ENCODE measurements at regions of chr6 and their contacts with region 1.

Region 1: DNA sequence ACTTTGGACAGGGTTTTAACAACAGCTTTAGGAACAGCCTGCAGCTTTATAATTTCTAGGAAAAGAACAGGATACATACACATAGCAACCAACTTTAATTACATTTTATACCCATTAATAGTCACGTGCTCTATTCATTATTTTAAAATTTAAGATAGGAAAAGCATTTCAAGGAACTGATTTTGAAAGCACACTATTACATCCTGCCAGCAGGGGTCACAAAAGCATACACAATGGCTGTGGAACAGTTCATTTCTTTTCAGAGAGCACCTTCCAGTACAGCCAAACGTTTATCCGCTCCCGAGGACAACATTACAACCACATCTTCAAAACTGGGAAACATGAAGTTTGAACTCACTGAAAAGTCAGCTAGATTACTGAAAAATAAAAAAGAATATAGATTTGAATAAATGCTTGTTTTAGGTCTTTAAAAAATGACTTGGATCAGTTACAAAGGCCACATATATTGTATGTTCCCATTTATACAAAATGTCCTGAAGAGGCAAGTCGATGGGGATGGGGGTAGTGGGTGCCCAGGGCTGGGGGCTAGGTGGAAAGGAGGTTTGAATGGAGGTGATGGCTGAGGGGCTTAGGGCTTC is 104.6 kb upstream of the EXOC2 start:
- DNase-seq: peak in 1 of 2 experiments; percentile 35
- H3K4me3 ChIP-seq: no peak overlapping the region
- H3K27ac ChIP-seq: no peak overlapping the region
- H3K4me1 ChIP-seq: no peaks in the 10 kb centered on the region
- H3K27me3 ChIP-seq: no peaks in the 10 kb centered on the region
- CTCF ChIP-seq: peak; percentile 84

Region 2: GRCh38 chr6:222468-222867 is 575.1 kb before region 1 on chr6:
- CTCF ChIA-PET with region 1: interaction called, 21 read pairs
- POLR2A ChIA-PET with region 1: no interaction called
- intact Hi-C with region 1: no loop called
- DNase-seq: no peak
- H3K4me3 ChIP-seq: no peak overlapping the region
- H3K27ac ChIP-seq: no peak overlapping the region
- H3K4me1 ChIP-seq: no peaks in the 10 kb centered on the region
- H3K27me3 ChIP-seq: no peaks in the 10 kb centered on the region; the same call in 1 of the 2 replicates
- CTCF ChIP-seq: no peak

Region 3: DNA sequence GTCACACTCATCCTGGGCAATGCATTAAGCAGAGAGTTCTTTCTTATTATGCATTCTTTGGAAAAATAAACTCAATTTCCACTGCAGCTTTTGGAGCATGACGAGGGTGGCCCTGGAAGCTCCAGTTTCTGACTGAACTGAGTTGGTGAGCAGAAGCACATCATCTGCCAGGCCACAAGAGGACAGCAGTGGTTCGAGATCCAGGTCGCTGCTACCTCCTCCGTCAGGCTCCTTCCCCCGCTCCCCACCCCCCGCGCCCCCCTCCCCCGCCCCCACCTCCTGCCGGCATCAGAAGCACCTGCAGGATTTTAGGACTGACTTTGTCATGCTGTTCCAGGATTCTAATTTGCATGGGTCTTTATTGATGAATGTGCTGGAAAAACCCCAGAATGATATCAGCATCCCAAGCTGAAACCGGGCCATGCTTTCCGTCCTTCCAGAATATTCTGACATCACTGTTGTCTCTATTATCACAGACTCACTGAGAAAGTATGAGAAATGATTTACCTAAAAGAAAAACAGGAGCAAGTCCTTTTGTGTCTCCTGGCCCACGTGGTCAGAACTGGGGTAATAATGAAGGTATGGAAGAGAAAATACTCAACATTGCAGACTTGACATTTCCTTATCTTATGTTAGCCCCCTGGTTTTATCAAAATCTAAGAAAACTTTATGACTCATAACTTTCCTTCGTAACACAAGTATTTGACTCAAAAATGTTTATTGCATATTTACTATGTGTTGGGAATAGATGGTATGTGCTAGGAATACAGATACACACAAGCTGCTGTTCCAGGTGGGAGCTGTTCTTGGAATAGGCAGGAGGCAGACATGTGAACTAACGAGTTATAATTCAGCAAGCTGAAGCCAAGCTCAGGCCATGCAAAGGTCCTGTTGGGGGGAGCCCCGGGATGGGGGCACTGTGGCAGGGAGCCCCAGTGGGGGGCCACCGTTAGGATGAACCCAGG is 115.6 kb after region 1 on chr6:
- CTCF ChIA-PET with region 1: no interaction called
- POLR2A ChIA-PET with region 1: no interaction called
- intact Hi-C with region 1: loop called (anchors 2 kb)
- DNase-seq: peak; percentile 34 to 58
- H3K4me3 ChIP-seq: no peak overlapping the region
- H3K27ac ChIP-seq: no peak overlapping the region
- H3K4me1 ChIP-seq: peaks cover 7% of the 10 kb centered on the region
- H3K27me3 ChIP-seq: no peaks in the 10 kb centered on the region
- CTCF ChIP-seq: peak; percentile 49

Region 4: DNA sequence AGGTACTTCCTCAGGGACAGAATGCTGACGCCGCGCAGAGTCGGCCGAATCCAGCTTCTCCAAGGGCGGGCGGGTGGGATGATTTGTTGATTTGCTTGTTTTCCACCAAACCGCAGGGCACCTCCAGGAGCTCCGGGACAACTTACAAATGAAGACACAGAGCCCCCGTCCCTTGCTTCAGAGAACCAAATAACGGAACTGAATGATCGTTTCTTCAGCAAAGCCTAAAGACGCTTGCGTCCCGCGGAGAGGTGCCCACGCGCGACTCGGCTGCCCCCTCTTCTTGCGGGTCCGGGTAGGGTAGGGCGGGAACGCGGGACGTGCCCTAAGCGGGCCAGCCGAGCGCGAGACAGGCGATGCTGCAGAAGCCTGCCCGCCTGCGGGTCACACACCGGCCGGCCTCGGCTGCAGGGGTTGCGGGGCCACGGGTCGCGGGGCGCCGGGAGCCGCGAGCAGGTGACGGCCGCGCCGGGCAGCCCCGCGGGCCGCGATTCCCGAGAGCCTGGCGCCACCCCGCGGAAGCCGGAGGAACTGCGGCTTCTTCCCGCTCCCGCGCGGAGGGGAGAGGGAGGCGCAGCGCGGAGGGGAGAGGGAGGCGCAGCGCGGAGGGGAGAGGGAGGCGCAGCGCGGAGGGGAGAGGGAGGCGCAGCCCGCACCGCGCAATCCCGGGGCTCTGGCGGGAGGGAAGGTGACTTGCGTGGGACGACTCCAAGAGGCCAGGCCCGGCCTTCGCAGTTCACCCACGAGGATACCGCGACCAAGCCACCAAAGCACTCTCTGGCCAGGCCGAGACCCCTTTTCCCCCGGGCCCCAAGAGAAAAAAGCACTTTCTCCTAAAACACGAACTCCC is 584.1 kb after region 1 on chr6:
- CTCF ChIA-PET with region 1: no interaction called
- POLR2A ChIA-PET with region 1: no interaction called
- intact Hi-C with region 1: loop called (anchors 1 kb)
- DNase-seq: peak in 1 of 2 experiments; percentile 73
- H3K4me3 ChIP-seq: peak overlapping the region; percentile 49; the same call in 1 of the 2 replicates
- H3K27ac ChIP-seq: no peak overlapping the region
- H3K4me1 ChIP-seq: no peaks in the 10 kb centered on the region
- H3K27me3 ChIP-seq: no peaks in the 10 kb centered on the region
- CTCF ChIP-seq: peak; percentile 67

Region 5: GRCh38 chr6:1424306-1424928 is 626.8 kb after region 1 on chr6:
- CTCF ChIA-PET with region 1: interaction called, 3 read pairs
- POLR2A ChIA-PET with region 1: no interaction called
- intact Hi-C with region 1: loop called (anchors 10 kb)
- DNase-seq: peak in 1 of 2 experiments; percentile 45
- H3K4me3 ChIP-seq: no peak overlapping the region
- H3K27ac ChIP-seq: no peak overlapping the region
- H3K4me1 ChIP-seq: no peaks in the 10 kb centered on the region
- H3K27me3 ChIP-seq: 0 out of 2 replicates have a peak, but pooled peaks cover 8% of the 10 kb centered on the region
- CTCF ChIP-seq: peak; percentile 68

Measured in PC-9 (cell line).